Activated CD4-positive, alpha-beta memory T cell treated with anti-CD3 and anti-CD28 coated beads for 36 hours (primary cell): ENCODE measurements at regions of chr3 and their contacts with region 1.

Region 1: GRCh38 chr3:184811999-184812661 is at the start of gene VPS8:
- DNase-seq: peak; percentile 98
- H3K4me3 Mint-ChIP-seq: peak within 1 kb of the TSS; percentile 87
- H3K27ac Mint-ChIP-seq: peak within 1 kb of the TSS; percentile 84
- H3K4me1 Mint-ChIP-seq: peaks cover 51% of the 10 kb centered on the region
- H3K27me3 Mint-ChIP-seq: no peaks in the 10 kb centered on the region
- total RNA-seq, gene VPS8: 28.7 to 32.3 TPM

Region 2: GRCh38 chr3:183959214-183959613 is 852.9 kb before region 1 on chr3:
- CTCF ChIA-PET with region 1: no interaction called
- POLR2A ChIA-PET with region 1: no interaction called
- intact Hi-C with region 1: no loop called
- DNase-seq: no peak
- H3K4me3 Mint-ChIP-seq: no peak overlapping the region
- H3K27ac Mint-ChIP-seq: no peak overlapping the region
- H3K4me1 Mint-ChIP-seq: no peaks in the 10 kb centered on the region
- H3K27me3 Mint-ChIP-seq: no peaks in the 10 kb centered on the region

Region 3: GRCh38 chr3:184636741-184637316 is 175.3 kb before region 1 on chr3:
- CTCF ChIA-PET with region 1: no interaction called
- POLR2A ChIA-PET with region 1: no interaction called
- intact Hi-C with region 1: loop called (anchors 1 kb)
- DNase-seq: peak; percentile 76
- H3K4me3 Mint-ChIP-seq: no peak overlapping the region
- H3K27ac Mint-ChIP-seq: peak overlapping the region; percentile 53
- H3K4me1 Mint-ChIP-seq: peaks cover 3% of the 10 kb centered on the region
- H3K27me3 Mint-ChIP-seq: no peaks in the 10 kb centered on the region

Region 4: DNA sequence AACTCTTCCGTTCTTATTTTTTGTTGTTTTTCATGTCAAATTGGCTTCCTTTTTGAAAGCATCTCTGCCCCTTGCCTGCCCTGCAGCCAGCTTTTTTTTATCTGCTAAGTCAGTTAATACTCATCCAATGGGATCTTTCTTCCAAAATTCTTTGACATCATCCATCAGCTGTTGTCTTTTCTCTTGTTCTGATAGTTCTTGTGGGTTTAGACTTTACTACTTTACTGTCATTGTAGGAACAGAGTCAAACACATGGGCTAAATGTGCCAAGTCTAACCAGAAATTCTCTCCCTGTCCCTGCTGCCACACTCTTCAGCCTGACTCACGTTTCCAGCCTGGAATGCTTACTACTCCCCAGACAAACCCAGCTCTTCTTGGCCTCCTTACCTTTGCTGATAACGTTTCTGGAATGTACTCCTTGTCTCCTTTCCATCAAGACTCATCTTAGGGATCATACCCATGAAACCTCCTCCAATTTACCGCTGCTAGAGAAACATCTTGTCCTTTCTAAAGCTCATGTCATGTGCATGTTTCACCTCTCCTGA is 10.8 kb before region 1 on chr3:
- CTCF ChIA-PET with region 1: interaction called, 21 read pairs
- POLR2A ChIA-PET with region 1: no interaction called
- intact Hi-C with region 1: no loop called
- DNase-seq: no peak
- H3K4me3 Mint-ChIP-seq: no peak overlapping the region
- H3K27ac Mint-ChIP-seq: no peak overlapping the region
- H3K4me1 Mint-ChIP-seq: no peaks in the 10 kb centered on the region
- H3K27me3 Mint-ChIP-seq: peaks cover 20% of the 10 kb centered on the region

Region 5: GRCh38 chr3:184846496-184846895 is 34.4 kb after region 1 on chr3:
- CTCF ChIA-PET with region 1: no interaction called
- POLR2A ChIA-PET with region 1: no interaction called
- intact Hi-C with region 1: no loop called
- DNase-seq: no peak
- H3K4me3 Mint-ChIP-seq: no peak overlapping the region
- H3K27ac Mint-ChIP-seq: no peak overlapping the region
- H3K4me1 Mint-ChIP-seq: no peaks in the 10 kb centered on the region
- H3K27me3 Mint-ChIP-seq: no peaks in the 10 kb centered on the region

Region 6: GRCh38 chr3:184864000-184864399 is 51.9 kb after region 1 on chr3:
- CTCF ChIA-PET with region 1: no interaction called
- POLR2A ChIA-PET with region 1: no interaction called
- intact Hi-C with region 1: no loop called
- DNase-seq: no peak
- H3K4me3 Mint-ChIP-seq: no peak overlapping the region
- H3K27ac Mint-ChIP-seq: no peak overlapping the region
- H3K4me1 Mint-ChIP-seq: no peaks in the 10 kb centered on the region
- H3K27me3 Mint-ChIP-seq: no peaks in the 10 kb centered on the region

Region 7: DNA sequence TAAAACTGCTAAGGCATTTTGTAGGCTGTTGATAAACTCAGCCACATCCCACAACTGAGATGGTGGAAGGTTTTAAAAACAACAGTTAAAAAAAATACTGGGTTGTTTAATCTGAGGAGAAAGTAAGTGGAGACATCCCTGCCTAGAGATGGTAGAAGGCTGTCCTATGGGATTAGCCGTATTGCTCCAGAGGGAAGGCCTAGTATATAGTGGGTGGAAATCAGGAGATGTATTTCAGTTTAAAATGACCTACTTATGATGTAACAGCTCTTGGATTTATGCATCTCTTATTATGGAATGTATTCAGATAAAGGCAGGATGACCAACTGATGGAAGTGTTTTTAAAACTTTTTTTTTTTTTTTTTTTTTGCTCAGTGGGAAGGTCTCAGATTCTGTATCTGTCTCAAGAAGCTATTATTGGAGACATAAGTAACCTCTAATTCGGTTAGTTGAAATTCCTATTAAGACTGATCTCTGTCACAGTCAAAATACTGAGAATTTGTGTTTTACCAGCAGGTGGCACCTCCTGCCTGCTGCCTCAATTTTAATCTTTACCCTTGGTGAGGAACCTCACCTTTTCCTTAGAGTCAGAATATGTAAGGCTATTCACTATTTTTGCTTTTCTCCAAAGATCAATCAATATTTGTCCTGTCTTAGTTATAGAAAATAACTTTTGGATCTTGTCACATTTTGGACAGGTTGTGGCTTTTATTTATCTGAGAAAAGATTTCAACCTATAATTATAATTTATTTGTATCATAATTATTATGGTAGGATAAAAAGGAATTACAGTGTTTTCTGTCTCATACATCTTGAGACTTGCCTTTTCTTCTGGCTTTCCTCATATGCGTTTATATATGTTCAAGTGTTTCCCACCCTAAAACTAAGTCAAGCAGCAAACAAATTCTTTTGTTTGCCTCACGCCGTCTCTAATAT is 62.8 kb after region 1 on chr3:
- CTCF ChIA-PET with region 1: no interaction called
- POLR2A ChIA-PET with region 1: no interaction called
- intact Hi-C with region 1: loop called (anchors 2 kb)
- DNase-seq: peak; percentile 17
- H3K4me3 Mint-ChIP-seq: no peak overlapping the region
- H3K27ac Mint-ChIP-seq: no peak overlapping the region
- H3K4me1 Mint-ChIP-seq: peaks cover 14% of the 10 kb centered on the region
- H3K27me3 Mint-ChIP-seq: no peaks in the 10 kb centered on the region

Region 8: GRCh38 chr3:185282696-185283394 is 470.7 kb after region 1 on chr3:
- CTCF ChIA-PET with region 1: no interaction called
- POLR2A ChIA-PET with region 1: no interaction called
- intact Hi-C with region 1: loop called (anchors 10 kb)
- DNase-seq: peak; percentile 96
- H3K4me3 Mint-ChIP-seq: peak overlapping the region; percentile 99
- H3K27ac Mint-ChIP-seq: peak overlapping the region; percentile 86
- H3K4me1 Mint-ChIP-seq: peaks cover 23% of the 10 kb centered on the region
- H3K27me3 Mint-ChIP-seq: peaks cover 10% of the 10 kb centered on the region